ENCODE measurements at regions of chr21 and their contacts with region 1.

Region 1: GRCh38 chr21:42684109-42684916 is 30.9 kb downstream of the PDE9A start:
- DNase-seq: peak in 1 of 3 donors; percentile 51
- ATAC-seq: no peak
- H3K4me3 ChIP-seq: no peak overlapping the region
- H3K27ac ChIP-seq: no peak overlapping the region
- H3K4me1 ChIP-seq: peaks cover 1% of the 10 kb centered on the region
- H3K27me3 ChIP-seq: no peaks in the 10 kb centered on the region

Region 2: GRCh38 chr21:42781150-42781970 is 97.0 kb after region 1 on chr21:
- intact Hi-C with region 1: loop called in 1 of 4 experiments (anchors 10 kb)
- DNase-seq: no peak
- ATAC-seq: no peak
- H3K4me3 ChIP-seq: peak overlapping the region; percentile 22
- H3K27ac ChIP-seq: no peak overlapping the region
- H3K4me1 ChIP-seq: no peaks in the 10 kb centered on the region
- H3K27me3 ChIP-seq: no peaks in the 10 kb centered on the region

Region 3: GRCh38 chr21:42830456-42831455 is 146.4 kb after region 1 on chr21:
- intact Hi-C with region 1: no loop called
- DNase-seq: peak in 1 of 3 donors; percentile 45
- ATAC-seq: peak in 1 of 2 donors; percentile 12
- H3K4me3 ChIP-seq: no peak overlapping the region
- H3K27ac ChIP-seq: no peak overlapping the region
- H3K4me1 ChIP-seq: no peaks in the 10 kb centered on the region
- H3K27me3 ChIP-seq: no peaks in the 10 kb centered on the region